Transverse colon (tissue), 4 donors: ENCODE measurements at regions of chr15 and their contacts with region 1.

Region 1: DNA sequence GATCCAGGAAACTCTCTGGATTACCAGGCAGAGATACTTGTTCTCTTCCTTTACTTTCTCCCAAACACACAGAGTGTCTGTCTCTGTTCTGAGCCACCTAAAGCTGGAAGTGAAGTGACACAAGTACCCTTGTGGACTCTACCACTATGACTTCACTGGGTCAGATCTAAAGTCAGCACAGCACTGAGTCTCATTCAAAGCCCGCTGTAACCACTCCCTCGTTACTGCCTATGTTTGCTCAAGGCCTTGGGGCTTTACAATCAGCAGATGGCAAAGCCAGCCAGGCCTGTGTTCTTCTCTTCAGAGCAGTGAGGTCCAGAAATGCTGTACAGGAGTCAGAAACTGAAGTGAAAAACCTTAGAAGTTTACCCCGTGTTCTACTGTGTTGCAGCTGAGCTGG is 588.3 kb upstream of the SEMA6D start:
- DNase-seq: peak; percentile 31
- H3K4me3 ChIP-seq: no peak overlapping the region
- H3K27ac ChIP-seq: no peak overlapping the region
- H3K4me1 ChIP-seq: no peaks in the 10 kb centered on the region
- H3K27me3 ChIP-seq: no peaks in the 10 kb centered on the region
- CTCF ChIP-seq: no peak
- EP300 ChIP-seq: no peak
- POLR2A ChIP-seq: no peak

Region 2: GRCh38 chr15:47116698-47117097 is 12.3 kb before region 1 on chr15:
- in situ Hi-C with region 1: no loop called
- intact Hi-C with region 1: loop called (anchors 1 kb)
- DNase-seq: no peak
- H3K4me3 ChIP-seq: no peak overlapping the region
- H3K27ac ChIP-seq: no peak overlapping the region
- H3K4me1 ChIP-seq: no peaks in the 10 kb centered on the region
- H3K27me3 ChIP-seq: no peaks in the 10 kb centered on the region
- CTCF ChIP-seq: peak in 1 of 5 experiments; percentile 21
- EP300 ChIP-seq: no peak
- POLR2A ChIP-seq: no peak

Region 3: DNA sequence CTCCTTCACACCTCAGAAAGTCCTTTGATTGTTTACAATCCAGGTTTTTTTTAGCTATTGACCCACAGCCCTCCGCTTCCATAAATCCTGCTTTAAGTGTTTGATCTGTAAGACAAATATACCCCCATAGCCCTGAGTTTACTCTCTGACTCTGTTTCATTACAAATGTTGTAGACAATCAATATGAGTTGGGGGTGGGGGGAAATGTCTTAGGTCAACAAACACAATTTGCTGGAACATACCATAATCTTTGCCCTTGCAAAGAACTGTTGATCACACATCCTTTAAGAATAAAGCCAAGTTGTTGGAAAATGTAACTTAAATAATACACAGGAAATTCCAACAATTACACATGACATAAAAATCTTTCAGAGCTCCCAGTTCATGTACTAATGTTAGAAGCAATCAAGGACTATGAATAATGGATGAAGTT is 286.5 kb after region 1 on chr15:
- in situ Hi-C with region 1: no loop called
- intact Hi-C with region 1: no loop called
- DNase-seq: no peak
- H3K4me3 ChIP-seq: no peak overlapping the region
- H3K27ac ChIP-seq: no peak overlapping the region
- H3K4me1 ChIP-seq: no peaks in the 10 kb centered on the region
- H3K27me3 ChIP-seq: no peaks in the 10 kb centered on the region
- CTCF ChIP-seq: no peak
- EP300 ChIP-seq: no peak
- POLR2A ChIP-seq: no peak